ENCODE measurements at regions of chr2 and their contacts with region 1.

Region 1: DNA sequence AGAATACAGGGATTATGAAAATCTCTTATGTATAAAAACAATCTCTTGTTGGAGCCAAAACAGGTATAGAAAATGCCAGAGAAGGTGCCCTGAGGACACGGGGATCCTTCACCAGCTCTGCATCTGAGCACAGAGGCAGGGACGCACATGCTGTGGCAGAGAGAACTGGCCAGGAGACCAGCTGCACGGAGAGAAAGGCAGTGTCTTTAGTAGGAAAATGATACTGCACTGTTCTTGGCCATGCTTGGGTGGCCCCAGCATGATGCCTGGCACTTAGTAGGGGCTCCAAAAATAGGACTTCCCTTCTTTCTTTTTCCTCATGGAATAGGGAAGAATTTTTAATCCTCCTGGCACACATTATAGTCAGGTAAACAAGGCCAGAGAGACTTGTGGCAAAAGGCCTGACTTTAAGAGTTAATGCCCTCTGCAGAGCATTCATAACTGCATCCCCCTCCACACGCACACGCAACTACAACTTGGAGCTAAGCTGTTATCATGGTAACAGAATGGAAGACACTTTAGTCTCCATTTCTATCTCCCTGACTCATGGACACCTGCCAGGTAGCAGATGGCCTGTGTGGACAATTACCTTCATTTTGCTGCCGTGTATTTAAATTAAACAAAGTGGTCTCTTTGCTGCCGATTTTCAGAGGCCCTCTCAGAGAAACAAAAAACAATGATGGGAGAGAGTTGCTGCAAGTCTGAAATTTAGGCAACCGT is 59.7 kb upstream of the DNMT3A start:
- DNase-seq: no peak
- ATAC-seq: no peak
- H3K4me3 ChIP-seq: no peak overlapping the region
- H3K27ac ChIP-seq: no peak overlapping the region
- H3K4me1 ChIP-seq: no peaks in the 10 kb centered on the region
- H3K27me3 ChIP-seq: no peaks in the 10 kb centered on the region
- CTCF ChIP-seq: no peak

Region 2: GRCh38 chr2:25376750-25377621 is 24.5 kb before region 1 on chr2:
- CTCF ChIA-PET with region 1: no interaction called
- POLR2A ChIA-PET with region 1: no interaction called
- in situ Hi-C with region 1: no loop called
- intact Hi-C with region 1: no loop called
- DNase-seq: peak; percentile 39
- ATAC-seq: peak; percentile 94
- H3K4me3 ChIP-seq: peak overlapping the region; percentile 24 to 41
- H3K27ac ChIP-seq: no peak overlapping the region
- H3K4me1 ChIP-seq: no peaks in the 10 kb centered on the region; the same call in 1 of the 2 replicates
- H3K27me3 ChIP-seq: no peaks in the 10 kb centered on the region
- CTCF ChIP-seq: peak; percentile 99

Region 3: GRCh38 chr2:25420820-25421237 is 19.4 kb after region 1 on chr2:
- CTCF ChIA-PET with region 1: no interaction called
- POLR2A ChIA-PET with region 1: interaction called, 12 read pairs
- in situ Hi-C with region 1: no loop called
- intact Hi-C with region 1: no loop called
- DNase-seq: no peak
- ATAC-seq: no peak
- H3K4me3 ChIP-seq: no peak overlapping the region
- H3K27ac ChIP-seq: no peak overlapping the region
- H3K4me1 ChIP-seq: no peaks in the 10 kb centered on the region
- H3K27me3 ChIP-seq: no peaks in the 10 kb centered on the region
- CTCF ChIP-seq: no peak